GM18951 (cell line): ENCODE measurements at regions of chr12 and their contacts with region 1.

Region 1: GRCh38 chr12:111330800-111331752 is 37.8 kb downstream of the PHETA1 start:
- POLR2A ChIP-seq: no peak

Region 2: GRCh38 chr12:110906083-110906482 is 425.0 kb before region 1 on chr12:
- in situ Hi-C with region 1: no loop called
- POLR2A ChIP-seq: no peak

Region 3: GRCh38 chr12:110957652-110958051 is 373.4 kb before region 1 on chr12:
- in situ Hi-C with region 1: no loop called
- POLR2A ChIP-seq: no peak

Region 4: DNA sequence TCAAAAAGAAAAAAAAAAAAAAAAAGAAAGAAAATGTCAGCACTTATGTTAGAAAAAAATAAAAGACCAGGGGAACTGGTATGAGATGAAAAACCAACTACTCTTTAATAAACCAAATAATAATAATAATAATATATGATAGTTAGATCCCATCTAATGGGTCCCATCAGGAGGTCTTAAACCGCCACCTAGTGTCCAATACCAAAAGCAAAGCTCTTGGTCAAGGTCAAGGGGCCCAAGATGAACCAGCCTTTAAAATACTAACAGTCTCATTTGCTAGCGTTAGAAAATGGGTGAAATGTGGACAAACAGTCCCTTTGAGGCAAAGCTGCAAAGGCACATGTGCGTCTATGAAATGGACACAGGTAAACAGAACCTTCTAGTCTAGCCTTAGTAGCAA is 342.4 kb after region 1 on chr12:
- in situ Hi-C with region 1: loop called (anchors 25 kb)
- POLR2A ChIP-seq: no peak